ENCODE measurements at regions of chr3 and their contacts with region 1.

Region 1: GRCh38 chr3:188954590-188955208 is 217.1 kb upstream of the TPRG1 start:
- DNase-seq: peak; percentile 78
- ATAC-seq: peak; percentile 56
- H3K4me3 Mint-ChIP-seq: no peak overlapping the region
- H3K27ac Mint-ChIP-seq: no peak overlapping the region
- H3K4me1 Mint-ChIP-seq: peaks cover 40% of the 10 kb centered on the region
- H3K27me3 Mint-ChIP-seq: no peaks in the 10 kb centered on the region
- CTCF ChIP-seq: peak; percentile 90

Region 2: GRCh38 chr3:188286087-188286513 is 668.6 kb before region 1 on chr3:
- CTCF ChIA-PET with region 1: interaction called, 10 read pairs
- POLR2A ChIA-PET with region 1: no interaction called
- intact Hi-C with region 1: no loop called
- DNase-seq: no peak
- ATAC-seq: no peak
- H3K4me3 Mint-ChIP-seq: no peak overlapping the region
- H3K27ac Mint-ChIP-seq: peak overlapping the region; percentile 32
- H3K4me1 Mint-ChIP-seq: peaks cover 53% of the 10 kb centered on the region
- H3K27me3 Mint-ChIP-seq: no peaks in the 10 kb centered on the region
- CTCF ChIP-seq: no peak

Region 3: GRCh38 chr3:188400494-188401243 is 554.0 kb before region 1 on chr3:
- CTCF ChIA-PET with region 1: interaction called, 10 read pairs
- POLR2A ChIA-PET with region 1: no interaction called
- intact Hi-C with region 1: no loop called
- DNase-seq: peak; percentile 51
- ATAC-seq: peak; percentile 83
- H3K4me3 Mint-ChIP-seq: no peak overlapping the region
- H3K27ac Mint-ChIP-seq: peak overlapping the region; percentile 71
- H3K4me1 Mint-ChIP-seq: peaks cover 67% of the 10 kb centered on the region
- H3K27me3 Mint-ChIP-seq: no peaks in the 10 kb centered on the region
- CTCF ChIP-seq: no peak

Region 4: GRCh38 chr3:188830893-188831292 is 123.8 kb before region 1 on chr3:
- CTCF ChIA-PET with region 1: interaction called, 40 read pairs
- POLR2A ChIA-PET with region 1: no interaction called
- intact Hi-C with region 1: loop called (anchors 5 kb)
- DNase-seq: peak; percentile 15
- ATAC-seq: no peak
- H3K4me3 Mint-ChIP-seq: no peak overlapping the region
- H3K27ac Mint-ChIP-seq: no peak overlapping the region
- H3K4me1 Mint-ChIP-seq: peaks cover 13% of the 10 kb centered on the region
- H3K27me3 Mint-ChIP-seq: no peaks in the 10 kb centered on the region
- CTCF ChIP-seq: no peak

Region 5: GRCh38 chr3:188914552-188914951 is 40.1 kb before region 1 on chr3:
- CTCF ChIA-PET with region 1: interaction called, 37 read pairs
- POLR2A ChIA-PET with region 1: interaction called, 5 read pairs
- intact Hi-C with region 1: no loop called
- DNase-seq: peak; percentile 41
- ATAC-seq: peak; percentile 76
- H3K4me3 Mint-ChIP-seq: no peak overlapping the region
- H3K27ac Mint-ChIP-seq: peak overlapping the region; percentile 87
- H3K4me1 Mint-ChIP-seq: peaks cover 42% of the 10 kb centered on the region
- H3K27me3 Mint-ChIP-seq: no peaks in the 10 kb centered on the region
- CTCF ChIP-seq: no peak

Region 6: GRCh38 chr3:189041482-189042090 is 86.9 kb after region 1 on chr3:
- CTCF ChIA-PET with region 1: interaction called, 94 read pairs
- POLR2A ChIA-PET with region 1: interaction called, 3 read pairs
- intact Hi-C with region 1: no loop called
- DNase-seq: peak; percentile 89
- ATAC-seq: peak; percentile 90
- H3K4me3 Mint-ChIP-seq: no peak overlapping the region
- H3K27ac Mint-ChIP-seq: peak overlapping the region; percentile 75
- H3K4me1 Mint-ChIP-seq: peaks cover 45% of the 10 kb centered on the region
- H3K27me3 Mint-ChIP-seq: no peaks in the 10 kb centered on the region
- CTCF ChIP-seq: peak; percentile 85

Region 7: GRCh38 chr3:189148081-189148507 is 193.4 kb after region 1 on chr3:
- CTCF ChIA-PET with region 1: interaction called, 35 read pairs
- POLR2A ChIA-PET with region 1: no interaction called
- intact Hi-C with region 1: loop called (anchors 5 kb)
- DNase-seq: peak; percentile 81
- ATAC-seq: peak; percentile 88
- H3K4me3 Mint-ChIP-seq: no peak overlapping the region
- H3K27ac Mint-ChIP-seq: no peak overlapping the region
- H3K4me1 Mint-ChIP-seq: peaks cover 24% of the 10 kb centered on the region
- H3K27me3 Mint-ChIP-seq: no peaks in the 10 kb centered on the region
- CTCF ChIP-seq: peak; percentile 83